ENCODE measurements at regions of chr3 and their contacts with region 1.

Region 1: GRCh38 chr3:177705976-177706823 is 508.9 kb upstream of the TBL1XR1 start:
- DNase-seq: peak; percentile 46 to 65
- ATAC-seq: peak; percentile 64 to 94 (median 85)
- H3K4me3 ChIP-seq: no peak overlapping the region
- H3K27ac ChIP-seq: peak overlapping the region in 9 of 10 donors; percentile 2 to 76 (median 61)
- H3K4me1 ChIP-seq: peaks cover 0 to 33% (median 13%) of the 10 kb centered on the region in 9 donors
- H3K27me3 ChIP-seq: no peaks in the 10 kb centered on the region
- CTCF ChIP-seq: no peak

Region 2: GRCh38 chr3:177591379-177591778 is 114.8 kb before region 1 on chr3:
- intact Hi-C with region 1: no loop called
- DNase-seq: no peak
- ATAC-seq: peak in 7 of 8 donors; percentile 40 to 77 (median 67)
- H3K4me3 ChIP-seq: no peak overlapping the region
- H3K27ac ChIP-seq: peak overlapping the region in 4 of 10 donors; percentile 26 to 81 (median 45)
- H3K4me1 ChIP-seq: peaks cover 0 to 51% (median 5%) of the 10 kb centered on the region in 9 donors
- H3K27me3 ChIP-seq: no peaks in the 10 kb centered on the region
- CTCF ChIP-seq: no peak

Region 3: DNA sequence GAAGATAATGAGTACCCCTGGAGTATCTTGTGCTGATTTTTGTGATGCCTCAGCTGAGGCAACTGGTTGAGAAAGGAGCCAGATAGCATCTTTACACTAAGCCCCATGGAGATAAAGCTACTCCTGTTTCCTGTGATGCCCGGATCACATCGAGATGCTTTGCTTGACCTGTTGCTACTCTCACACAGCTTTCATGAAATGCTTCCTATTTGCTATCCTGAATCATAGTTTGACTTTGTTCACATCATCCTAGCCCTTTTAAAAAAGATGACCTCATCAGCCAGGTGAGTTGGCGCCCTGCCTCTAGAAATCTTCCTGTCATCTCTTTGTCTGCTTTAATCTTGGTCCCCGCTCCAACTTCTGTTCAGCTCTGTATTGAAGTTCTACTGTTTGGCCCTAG is 99.3 kb before region 1 on chr3:
- intact Hi-C with region 1: loop called in 1 of 10 experiments (anchors 5 kb)
- DNase-seq: no peak
- ATAC-seq: no peak
- H3K4me3 ChIP-seq: no peak overlapping the region
- H3K27ac ChIP-seq: no peak overlapping the region
- H3K4me1 ChIP-seq: peaks cover 0 to 34% (median 25%) of the 10 kb centered on the region in 9 donors
- H3K27me3 ChIP-seq: no peaks in the 10 kb centered on the region
- CTCF ChIP-seq: no peak

Measured in heart right ventricle (tissue), 16 donors.